ENCODE measurements at regions of chr19 and their contacts with region 1.

Region 1: GRCh38 chr19:46860125-46860845 is 512 bp upstream of the ARHGAP35 start:
- DNase-seq: peak; percentile 97 to 99 (median 98)
- H3K4me3 ChIP-seq: peak overlapping the region; percentile 65 to 91 (median 80)
- H3K27ac ChIP-seq: peak overlapping the region in 1 of 2 experiments; percentile 61
- H3K4me1 ChIP-seq: peaks cover 5 to 49% (median 40%) of the 10 kb centered on the region in 4 experiments
- H3K27me3 ChIP-seq: no peaks in the 10 kb centered on the region

Region 2: GRCh38 chr19:46872967-46873366 is 12.7 kb after region 1 on chr19:
- CTCF ChIA-PET with region 1: no interaction called
- POLR2A ChIA-PET with region 1: no interaction called
- DNase-seq: no peak
- H3K4me3 ChIP-seq: no peak overlapping the region
- H3K27ac ChIP-seq: no peak overlapping the region
- H3K4me1 ChIP-seq: no peaks in the 10 kb centered on the region
- H3K27me3 ChIP-seq: no peaks in the 10 kb centered on the region

Region 3: DNA sequence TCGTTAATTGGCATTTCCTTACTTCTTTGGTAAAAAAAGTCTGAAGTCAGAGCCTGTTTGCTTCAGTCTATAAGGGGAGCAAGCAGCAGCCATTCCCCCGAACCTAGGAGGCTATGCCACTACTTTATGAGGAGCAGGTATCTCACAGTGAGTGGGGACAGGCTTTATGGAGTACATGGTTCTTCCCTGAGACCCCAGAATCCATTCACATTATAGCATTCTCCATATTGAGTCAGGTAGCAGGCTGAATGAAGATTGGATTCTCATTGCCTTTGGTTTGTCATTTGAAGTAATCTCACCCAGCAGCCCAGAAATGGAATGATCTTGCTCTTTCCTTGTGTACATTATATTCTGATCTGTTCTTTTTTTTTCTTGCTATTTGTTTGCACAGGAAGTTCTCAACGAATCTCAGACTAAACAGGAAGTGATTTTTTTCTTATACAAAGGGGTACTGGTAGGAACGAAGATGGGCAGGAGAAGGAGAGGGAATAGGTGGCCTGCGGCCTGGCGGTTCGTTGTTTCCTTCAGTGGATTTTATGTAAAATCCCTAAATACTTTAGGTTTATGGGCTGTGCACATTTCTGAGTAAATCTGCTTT is 74.9 kb after region 1 on chr19:
- CTCF ChIA-PET with region 1: no interaction called
- POLR2A ChIA-PET with region 1: no interaction called
- DNase-seq: peak in 1 of 3 donors; percentile 8
- H3K4me3 ChIP-seq: no peak overlapping the region
- H3K27ac ChIP-seq: no peak overlapping the region
- H3K4me1 ChIP-seq: peaks cover 0 to 14% (median 9%) of the 10 kb centered on the region in 4 experiments
- H3K27me3 ChIP-seq: no peaks in the 10 kb centered on the region

Region 4: DNA sequence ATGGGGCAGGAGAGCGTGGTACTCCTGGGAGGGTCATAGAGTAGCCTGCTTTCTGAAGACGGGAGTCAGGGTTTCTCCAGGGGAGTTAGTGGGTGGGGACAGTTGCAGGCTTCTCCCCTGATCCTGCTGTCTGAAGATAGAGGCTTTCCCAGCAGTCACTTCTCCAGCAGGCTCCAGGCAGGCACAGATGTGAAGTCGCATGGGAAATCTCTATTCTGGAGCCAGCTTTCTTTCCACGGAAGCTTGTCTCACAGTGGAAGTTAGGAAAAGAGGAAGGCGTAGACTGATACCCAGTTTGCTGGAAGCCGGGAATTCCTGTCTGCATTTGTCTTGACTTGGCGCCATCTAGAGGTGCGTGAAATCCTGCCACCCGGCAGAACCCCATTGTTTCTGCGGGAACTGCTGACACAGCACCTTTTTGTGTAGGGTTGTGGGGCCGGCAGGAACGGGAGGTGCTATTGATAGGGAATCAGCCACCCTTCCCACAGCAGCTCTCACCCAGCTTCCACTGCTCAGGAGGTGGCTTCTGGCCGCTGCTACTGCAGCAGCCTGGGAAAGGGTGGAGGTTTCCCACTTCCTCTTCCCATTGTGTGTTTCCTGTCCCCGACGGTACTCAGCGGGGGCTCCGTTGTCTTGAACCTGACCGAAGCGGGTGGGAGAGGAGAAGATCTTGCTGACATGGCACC is 130.8 kb after region 1 on chr19:
- CTCF ChIA-PET with region 1: interaction called, 51 read pairs
- POLR2A ChIA-PET with region 1: no interaction called
- DNase-seq: peak; percentile 49 to 61 (median 55)
- H3K4me3 ChIP-seq: no peak overlapping the region
- H3K27ac ChIP-seq: no peak overlapping the region
- H3K4me1 ChIP-seq: peaks cover 0 to 10% (median 6%) of the 10 kb centered on the region in 4 experiments
- H3K27me3 ChIP-seq: no peaks in the 10 kb centered on the region

Measured in common myeloid progenitor, CD34-positive (primary cell).